ENCODE measurements at regions of chr17 and their contacts with region 1.

Region 1: GRCh38 chr17:79915850-79916430 is 76.7 kb upstream of the CBX4 start:
- H3K4me3 ChIP-seq: no peak overlapping the region
- H3K27ac ChIP-seq: no peak overlapping the region
- H3K4me1 ChIP-seq: no peaks in the 10 kb centered on the region
- CTCF ChIP-seq: no peak

Region 2: DNA sequence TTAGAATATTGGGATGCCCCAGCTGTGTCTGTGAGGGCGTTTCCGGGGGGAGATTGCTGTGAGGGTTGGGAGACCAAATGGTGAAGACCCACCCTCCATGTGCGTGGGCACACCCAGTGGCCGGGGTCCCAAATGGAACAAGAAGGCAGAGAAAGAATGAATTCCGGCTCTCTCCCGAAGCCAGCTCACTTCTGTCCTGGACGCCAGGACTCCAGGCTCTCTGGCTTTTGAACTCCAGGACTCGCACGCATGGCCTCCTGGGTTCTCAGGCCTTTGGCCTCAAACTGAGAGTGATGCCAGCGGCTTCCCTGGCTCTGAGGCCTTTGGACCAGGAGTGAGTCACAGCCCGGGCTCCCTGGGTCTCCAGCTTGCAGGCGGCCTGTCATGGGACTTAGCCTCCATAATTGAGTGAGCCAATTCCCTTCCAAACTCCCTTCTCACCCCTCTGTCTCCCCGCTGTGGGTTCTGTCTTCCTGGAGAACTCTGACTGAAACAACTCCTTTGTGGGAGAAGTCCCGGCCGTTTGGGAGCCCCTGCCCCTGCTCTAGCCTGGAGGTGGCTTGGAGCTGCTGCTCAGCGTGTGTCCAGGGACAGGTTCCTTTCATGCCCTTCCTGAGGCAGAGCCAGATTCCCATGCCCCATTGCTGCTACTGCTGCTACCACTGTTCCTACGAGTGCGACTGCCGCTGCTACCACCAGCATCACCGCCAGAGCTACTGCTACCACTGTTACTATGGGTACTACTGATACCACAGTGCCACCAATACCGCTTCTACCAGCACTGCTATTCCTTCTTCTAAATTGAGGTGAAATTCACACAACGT is 26.9 kb before region 1 on chr17:
- CTCF ChIA-PET with region 1: interaction called, 10 read pairs
- POLR2A ChIA-PET with region 1: no interaction called
- H3K4me3 ChIP-seq: no peak overlapping the region
- H3K27ac ChIP-seq: no peak overlapping the region
- H3K4me1 ChIP-seq: no peaks in the 10 kb centered on the region
- CTCF ChIP-seq: no peak

Region 3: DNA sequence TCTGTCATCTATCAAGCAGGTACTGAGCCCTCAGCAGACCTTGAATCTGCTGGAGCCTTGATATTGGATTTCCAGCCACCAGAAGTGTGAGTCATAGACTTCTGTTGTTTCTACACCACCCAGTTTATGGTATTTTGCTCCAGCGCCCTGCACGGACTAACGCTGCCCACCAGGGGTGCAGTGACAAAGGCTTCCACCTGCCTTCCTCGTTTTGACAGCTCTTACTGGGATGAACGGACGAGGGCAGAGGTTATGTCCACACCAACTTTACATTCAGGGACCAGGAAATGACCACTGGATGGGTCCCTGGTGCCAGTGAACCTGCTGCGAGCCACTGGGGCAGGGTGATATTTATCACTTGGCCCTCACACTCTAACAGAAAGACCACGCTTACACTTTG is 10.1 kb before region 1 on chr17:
- CTCF ChIA-PET with region 1: no interaction called
- POLR2A ChIA-PET with region 1: no interaction called
- H3K4me3 ChIP-seq: no peak overlapping the region
- H3K27ac ChIP-seq: no peak overlapping the region
- H3K4me1 ChIP-seq: no peaks in the 10 kb centered on the region; the same call in 1 of the 2 replicates
- CTCF ChIP-seq: no peak